Right ventricle myocardium inferior (tissue), 1 donor: ENCODE measurements at regions of chr5 and their contacts with region 1.

Region 1: GRCh38 chr5:472656-473553 is 29.9 kb downstream of the EXOC3 start:
- DNase-seq: peak; percentile 94
- ATAC-seq: peak; percentile 90

Region 2: DNA sequence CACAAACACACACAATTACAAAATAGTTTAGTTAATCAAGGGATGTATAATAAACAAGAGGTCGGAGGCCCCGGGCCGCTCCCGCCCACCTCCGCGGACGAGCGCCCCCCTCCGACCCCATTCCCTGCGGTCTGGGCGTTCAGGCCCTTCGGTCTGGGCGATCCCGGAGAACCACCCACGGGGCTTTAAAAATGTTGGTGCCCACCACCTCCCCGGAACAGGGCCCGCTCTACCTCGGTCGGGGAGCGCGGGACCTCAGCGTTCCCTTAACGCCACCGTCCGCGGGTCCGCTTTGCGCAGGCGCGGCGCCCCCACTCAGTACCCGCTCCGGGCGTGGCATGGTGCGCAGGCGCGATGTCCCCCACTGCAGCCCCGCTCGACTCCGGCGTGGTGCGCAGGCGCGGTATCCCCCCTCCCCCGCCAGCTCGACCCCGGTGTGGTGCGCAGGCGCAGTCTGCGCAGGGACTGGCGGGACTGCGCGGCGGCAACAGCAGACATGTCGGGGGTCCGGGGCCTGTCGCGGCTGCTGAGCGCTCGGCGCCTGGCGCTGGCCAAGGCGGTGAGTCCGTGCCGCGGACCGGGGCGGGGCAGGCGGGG is 254.9 kb before region 1 on chr5 and contains the starts of genes CCDC127 and SDHA:
- intact Hi-C with region 1: loop called (anchors 5 kb)
- DNase-seq: peak; percentile 98
- ATAC-seq: peak; percentile 97
- total RNA-seq, gene CCDC127: 9.4 TPM
- total RNA-seq, gene SDHA: 811 TPM